ENCODE measurements at regions of chr12 and their contacts with region 1.

Region 1: DNA sequence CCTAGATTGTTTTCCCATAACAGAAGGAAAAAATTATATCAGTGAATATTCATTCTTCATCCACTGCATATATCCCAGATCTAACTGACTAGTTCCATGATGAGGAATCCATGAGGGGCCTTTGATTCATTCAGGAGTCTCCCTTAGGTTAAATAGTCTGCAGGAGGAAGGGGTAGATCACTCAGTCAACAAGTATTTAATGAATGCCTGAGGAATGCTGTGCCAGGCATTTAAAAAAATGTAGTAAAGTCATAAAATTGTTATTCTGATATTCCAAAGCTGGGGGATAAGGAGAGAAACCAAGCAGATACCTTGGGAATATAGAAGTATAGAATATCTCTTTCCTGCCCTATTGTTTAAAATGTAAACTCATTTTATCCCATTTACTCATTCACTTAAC is 216.2 kb upstream of the CAND1 start:
- DNase-seq: no peak
- ATAC-seq: no peak
- H3K4me3 ChIP-seq: no peak overlapping the region
- H3K4me1 ChIP-seq: no peaks in the 10 kb centered on the region
- CTCF ChIP-seq: no peak

Region 2: GRCh38 chr12:66678338-66679270 is 374.4 kb before region 1 on chr12 and contains the start of gene GRIP1:
- intact Hi-C with region 1: no loop called
- DNase-seq: no peak
- ATAC-seq: no peak
- H3K4me3 ChIP-seq: no peak within 1 kb of the TSS
- H3K4me1 ChIP-seq: no peaks in the 10 kb centered on the region
- CTCF ChIP-seq: no peak
- total RNA-seq, gene GRIP1: 6.6 to 22.8 (median 12.8) TPM

Region 3: DNA sequence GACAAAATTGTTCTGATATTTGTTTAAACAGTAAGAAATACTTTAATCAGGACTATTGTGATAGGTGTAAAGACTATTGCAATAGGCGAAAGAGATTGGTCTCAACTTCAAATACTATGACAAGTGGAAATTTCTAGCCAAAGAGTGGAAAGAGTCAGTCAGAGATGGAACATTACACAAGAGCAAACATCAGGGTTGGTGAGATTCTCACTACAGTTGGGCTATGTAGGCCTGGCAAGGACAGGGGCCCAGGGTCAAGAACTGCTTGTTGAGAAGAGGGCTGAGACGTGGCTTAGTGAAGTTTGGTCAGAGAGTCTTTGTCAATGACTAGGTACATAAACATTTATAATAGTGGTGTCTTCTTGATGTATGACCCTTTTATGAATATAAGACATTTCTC is 235.6 kb after region 1 on chr12:
- intact Hi-C with region 1: loop called in 1 of 2 experiments (anchors 10 kb)
- DNase-seq: no peak
- ATAC-seq: no peak
- H3K4me3 ChIP-seq: no peak overlapping the region
- H3K4me1 ChIP-seq: no peaks in the 10 kb centered on the region
- CTCF ChIP-seq: no peak